ENCODE measurements at regions of chr7 and their contacts with region 1.

Region 1: GRCh38 chr7:36967387-36967786 is 243.1 kb upstream of the AOAH start:
- H3K4me3 ChIP-seq: no peak overlapping the region
- H3K27ac ChIP-seq: no peak overlapping the region
- H3K4me1 ChIP-seq: peaks cover 8% of the 10 kb centered on the region
- CTCF ChIP-seq: no peak

Region 2: GRCh38 chr7:36406156-36406555 is 561.2 kb before region 1 on chr7:
- CTCF ChIA-PET with region 1: no interaction called
- POLR2A ChIA-PET with region 1: no interaction called
- H3K4me3 ChIP-seq: no peak overlapping the region
- H3K27ac ChIP-seq: no peak overlapping the region
- H3K4me1 ChIP-seq: peaks cover 8% of the 10 kb centered on the region
- CTCF ChIP-seq: no peak

Region 3: GRCh38 chr7:36943591-36944435 is 23.6 kb before region 1 on chr7:
- CTCF ChIA-PET with region 1: interaction called, 12 read pairs
- POLR2A ChIA-PET with region 1: no interaction called
- H3K4me3 ChIP-seq: no peak overlapping the region
- H3K27ac ChIP-seq: no peak overlapping the region
- H3K4me1 ChIP-seq: no peaks in the 10 kb centered on the region
- CTCF ChIP-seq: no peak

Region 4: GRCh38 chr7:36979810-36980248 is 12.4 kb after region 1 on chr7:
- CTCF ChIA-PET with region 1: interaction called, 48 read pairs
- POLR2A ChIA-PET with region 1: interaction called, 3 read pairs
- H3K4me3 ChIP-seq: no peak overlapping the region
- H3K27ac ChIP-seq: no peak overlapping the region
- H3K4me1 ChIP-seq: no peaks in the 10 kb centered on the region
- CTCF ChIP-seq: no peak

Region 5: GRCh38 chr7:36986429-36987362 is 19.3 kb after region 1 on chr7:
- CTCF ChIA-PET with region 1: interaction called, 48 read pairs
- POLR2A ChIA-PET with region 1: no interaction called
- H3K4me3 ChIP-seq: no peak overlapping the region
- H3K27ac ChIP-seq: no peak overlapping the region
- H3K4me1 ChIP-seq: peaks cover 3% of the 10 kb centered on the region; the same call in 1 of the 2 replicates
- CTCF ChIP-seq: peak; percentile 42; the same call in 1 of the 2 replicates

Region 6: DNA sequence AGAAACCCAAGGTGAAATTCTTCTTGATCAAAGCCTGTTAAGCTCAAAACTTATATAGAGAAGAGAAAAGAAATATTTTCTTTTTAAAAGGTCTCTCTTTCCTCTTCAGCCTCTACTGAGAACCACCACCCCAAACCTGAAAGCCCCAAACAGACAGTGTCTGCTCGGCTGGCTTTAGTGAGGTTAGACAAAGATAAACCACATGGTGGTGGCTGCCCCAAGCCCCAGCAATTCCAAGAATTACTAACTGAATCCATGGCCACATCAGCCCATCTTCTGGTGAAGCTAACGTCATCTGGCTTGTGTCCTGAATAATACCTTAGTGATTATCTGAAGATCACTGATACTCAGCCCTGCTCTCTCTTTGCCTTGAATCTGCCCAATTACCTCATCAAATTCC is 206.3 kb after region 1 on chr7:
- CTCF ChIA-PET with region 1: interaction called, 41 read pairs
- POLR2A ChIA-PET with region 1: no interaction called
- H3K4me3 ChIP-seq: no peak overlapping the region
- H3K27ac ChIP-seq: no peak overlapping the region
- H3K4me1 ChIP-seq: no peaks in the 10 kb centered on the region
- CTCF ChIP-seq: no peak

Region 7: GRCh38 chr7:37186753-37187152 is 219.4 kb after region 1 on chr7:
- CTCF ChIA-PET with region 1: interaction called, 101 read pairs
- POLR2A ChIA-PET with region 1: interaction called, 10 read pairs
- H3K4me3 ChIP-seq: no peak overlapping the region
- H3K27ac ChIP-seq: no peak overlapping the region
- H3K4me1 ChIP-seq: no peaks in the 10 kb centered on the region
- CTCF ChIP-seq: no peak

Region 8: GRCh38 chr7:37201003-37201875 is 233.9 kb after region 1 on chr7:
- CTCF ChIA-PET with region 1: interaction called, 37 read pairs
- POLR2A ChIA-PET with region 1: no interaction called
- H3K4me3 ChIP-seq: no peak overlapping the region
- H3K27ac ChIP-seq: no peak overlapping the region
- H3K4me1 ChIP-seq: no peaks in the 10 kb centered on the region
- CTCF ChIP-seq: peak; percentile 35; the same call in 1 of the 2 replicates